ENCODE measurements at regions of chr11 and their contacts with region 1.

Region 1: GRCh38 chr11:25981998-25982397 is 349.9 kb upstream of the ANO3 start:
- DNase-seq: peak in 2 of 5 donors; percentile 16 to 18
- H3K4me3 ChIP-seq: no peak overlapping the region
- H3K27ac ChIP-seq: no peak overlapping the region
- H3K4me1 ChIP-seq: peaks cover 2% of the 10 kb centered on the region
- H3K27me3 ChIP-seq: no peaks in the 10 kb centered on the region
- CTCF ChIP-seq: peak; percentile 32 to 51 (median 34)
- EP300 ChIP-seq: no peak
- POLR2A ChIP-seq: no peak

Region 2: GRCh38 chr11:25816411-25816810 is 165.6 kb before region 1 on chr11:
- intact Hi-C with region 1: no loop called
- DNase-seq: no peak
- H3K4me3 ChIP-seq: no peak overlapping the region
- H3K27ac ChIP-seq: no peak overlapping the region
- H3K4me1 ChIP-seq: no peaks in the 10 kb centered on the region
- H3K27me3 ChIP-seq: no peaks in the 10 kb centered on the region
- CTCF ChIP-seq: no peak
- EP300 ChIP-seq: no peak
- POLR2A ChIP-seq: no peak

Region 3: GRCh38 chr11:26219183-26220117 is 237.5 kb after region 1 on chr11:
- intact Hi-C with region 1: loop called in 3 of 4 experiments (anchors 5 kb)
- DNase-seq: no peak
- H3K4me3 ChIP-seq: no peak overlapping the region
- H3K27ac ChIP-seq: no peak overlapping the region
- H3K4me1 ChIP-seq: peaks cover 2% of the 10 kb centered on the region
- H3K27me3 ChIP-seq: no peaks in the 10 kb centered on the region
- CTCF ChIP-seq: no peak
- EP300 ChIP-seq: no peak
- POLR2A ChIP-seq: no peak

Region 4: GRCh38 chr11:26227296-26227695 is 245.3 kb after region 1 on chr11:
- intact Hi-C with region 1: loop called (anchors 5 kb)
- DNase-seq: no peak
- H3K4me3 ChIP-seq: no peak overlapping the region
- H3K27ac ChIP-seq: no peak overlapping the region
- H3K4me1 ChIP-seq: no peaks in the 10 kb centered on the region
- H3K27me3 ChIP-seq: no peaks in the 10 kb centered on the region
- CTCF ChIP-seq: peak; percentile 24 to 57 (median 27)
- EP300 ChIP-seq: no peak
- POLR2A ChIP-seq: no peak

Measured in ovary (tissue), 10 donors.